ENCODE measurements at regions of chr3 and their contacts with region 1.

Region 1: DNA sequence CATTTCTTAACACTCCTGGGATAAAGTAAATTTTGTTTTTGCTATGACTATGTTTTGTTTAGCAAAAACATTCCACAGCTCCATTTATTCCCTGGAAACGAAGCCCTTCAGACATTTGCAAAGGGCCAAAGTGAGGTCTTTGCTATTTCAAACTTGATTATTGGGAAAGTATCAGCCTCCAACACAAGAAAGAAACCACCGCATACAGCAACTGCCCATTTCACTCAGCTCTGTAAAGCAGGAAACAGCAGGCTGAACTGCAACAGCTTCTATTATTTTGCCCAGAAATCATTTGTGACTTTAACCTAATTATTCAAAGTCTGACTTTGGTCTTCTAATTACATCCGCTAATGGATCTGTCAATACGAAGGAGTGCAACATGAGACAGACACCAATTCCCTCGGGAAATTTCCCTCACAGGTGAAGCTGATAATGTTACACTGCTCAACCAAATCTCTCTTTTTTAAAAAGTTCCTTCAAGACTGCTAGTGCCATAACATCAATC is 72.1 kb downstream of the RFTN1 start:
- DNase-seq: no peak
- H3K4me3 ChIP-seq: no peak overlapping the region
- H3K27ac ChIP-seq: no peak overlapping the region
- H3K4me1 ChIP-seq: no peaks in the 10 kb centered on the region
- H3K27me3 ChIP-seq: no peaks in the 10 kb centered on the region
- CTCF ChIP-seq: no peak

Region 2: GRCh38 chr3:15578289-15578867 is 863.0 kb before region 1 on chr3:
- CTCF ChIA-PET with region 1: no interaction called
- dilution Hi-C with region 1: no loop called
- in situ Hi-C with region 1: no loop called
- intact Hi-C with region 1: no loop called
- DNase-seq: no peak
- H3K4me3 ChIP-seq: no peak overlapping the region
- H3K27ac ChIP-seq: no peak overlapping the region
- H3K4me1 ChIP-seq: no peaks in the 10 kb centered on the region
- H3K27me3 ChIP-seq: no peaks in the 10 kb centered on the region
- CTCF ChIP-seq: no peak

Region 3: GRCh38 chr3:16357186-16358147 is 84.0 kb before region 1 on chr3:
- CTCF ChIA-PET with region 1: no interaction called
- dilution Hi-C with region 1: no loop called
- in situ Hi-C with region 1: no loop called
- intact Hi-C with region 1: no loop called
- DNase-seq: no peak
- H3K4me3 ChIP-seq: no peak overlapping the region
- H3K27ac ChIP-seq: no peak overlapping the region
- H3K4me1 ChIP-seq: no peaks in the 10 kb centered on the region
- H3K27me3 ChIP-seq: no peaks in the 10 kb centered on the region
- CTCF ChIP-seq: no peak

Region 4: DNA sequence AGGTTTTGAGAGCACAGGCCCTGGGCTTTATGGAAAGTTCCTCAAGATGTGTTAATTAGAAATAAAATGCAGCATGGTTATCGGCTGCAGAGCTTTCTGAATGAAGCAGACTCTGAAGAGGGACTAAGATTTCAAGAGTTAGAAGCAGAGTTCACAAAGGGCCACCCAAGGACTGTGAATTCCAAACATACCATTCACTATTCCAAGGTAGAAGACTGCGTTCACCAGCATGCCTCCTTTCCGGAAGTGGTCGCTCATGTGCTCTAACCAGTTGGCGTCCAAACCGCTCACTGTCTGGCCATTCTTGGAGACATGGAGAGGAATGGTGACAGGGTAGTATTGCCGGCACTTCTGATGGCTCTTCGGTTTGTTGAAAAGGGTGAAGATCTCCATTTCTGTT is 71.5 kb before region 1 on chr3:
- CTCF ChIA-PET with region 1: no interaction called
- dilution Hi-C with region 1: no loop called
- in situ Hi-C with region 1: no loop called
- intact Hi-C with region 1: no loop called
- DNase-seq: no peak
- H3K4me3 ChIP-seq: no peak overlapping the region
- H3K27ac ChIP-seq: no peak overlapping the region
- H3K4me1 ChIP-seq: peaks cover 13% of the 10 kb centered on the region
- H3K27me3 ChIP-seq: no peaks in the 10 kb centered on the region
- CTCF ChIP-seq: no peak

Region 5: DNA sequence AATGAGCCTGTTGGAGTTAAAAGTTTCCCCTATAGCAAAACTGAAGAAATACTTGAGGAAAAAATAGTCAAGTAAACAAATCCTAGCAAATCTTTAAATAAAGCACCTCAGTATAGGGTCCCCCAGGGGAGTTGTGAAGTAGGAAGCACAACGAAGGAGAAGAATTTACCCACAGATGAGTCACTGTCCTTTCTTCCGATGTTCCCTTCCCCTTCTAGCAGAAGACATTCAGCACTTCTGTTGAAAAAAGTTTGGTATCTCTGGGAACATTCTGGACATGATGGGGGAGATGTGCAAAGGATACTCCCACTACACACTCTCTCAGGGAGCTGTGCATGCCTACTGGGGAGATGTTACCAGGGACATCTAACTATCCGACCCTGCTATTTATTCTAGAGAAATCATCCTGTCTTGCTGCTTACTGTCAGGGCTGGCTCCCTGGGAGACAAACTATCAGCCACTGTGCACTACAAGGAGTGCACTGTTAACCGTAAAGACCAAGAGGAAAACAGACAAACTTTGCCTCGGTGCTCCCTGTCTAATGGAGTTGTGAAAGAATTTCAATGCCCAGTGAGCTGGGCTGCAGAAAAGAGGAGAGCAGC is 21.7 kb before region 1 on chr3:
- CTCF ChIA-PET with region 1: no interaction called
- dilution Hi-C with region 1: no loop called
- in situ Hi-C with region 1: no loop called
- intact Hi-C with region 1: no loop called
- DNase-seq: no peak
- H3K4me3 ChIP-seq: no peak overlapping the region
- H3K27ac ChIP-seq: no peak overlapping the region
- H3K4me1 ChIP-seq: no peaks in the 10 kb centered on the region
- H3K27me3 ChIP-seq: no peaks in the 10 kb centered on the region
- CTCF ChIP-seq: no peak

Region 6: GRCh38 chr3:16482770-16483531 is 41.5 kb after region 1 on chr3:
- CTCF ChIA-PET with region 1: no interaction called
- dilution Hi-C with region 1: loop called (anchors 5 kb)
- in situ Hi-C with region 1: no loop called
- intact Hi-C with region 1: no loop called
- DNase-seq: no peak
- H3K4me3 ChIP-seq: no peak overlapping the region
- H3K27ac ChIP-seq: no peak overlapping the region
- H3K4me1 ChIP-seq: no peaks in the 10 kb centered on the region
- H3K27me3 ChIP-seq: no peaks in the 10 kb centered on the region
- CTCF ChIP-seq: no peak